Activated CD4-positive, alpha-beta memory T cell treated with anti-CD3 and anti-CD28 coated beads for 36 hours (primary cell): ENCODE measurements at regions of chr12 and their contacts with region 1.

Region 1: DNA sequence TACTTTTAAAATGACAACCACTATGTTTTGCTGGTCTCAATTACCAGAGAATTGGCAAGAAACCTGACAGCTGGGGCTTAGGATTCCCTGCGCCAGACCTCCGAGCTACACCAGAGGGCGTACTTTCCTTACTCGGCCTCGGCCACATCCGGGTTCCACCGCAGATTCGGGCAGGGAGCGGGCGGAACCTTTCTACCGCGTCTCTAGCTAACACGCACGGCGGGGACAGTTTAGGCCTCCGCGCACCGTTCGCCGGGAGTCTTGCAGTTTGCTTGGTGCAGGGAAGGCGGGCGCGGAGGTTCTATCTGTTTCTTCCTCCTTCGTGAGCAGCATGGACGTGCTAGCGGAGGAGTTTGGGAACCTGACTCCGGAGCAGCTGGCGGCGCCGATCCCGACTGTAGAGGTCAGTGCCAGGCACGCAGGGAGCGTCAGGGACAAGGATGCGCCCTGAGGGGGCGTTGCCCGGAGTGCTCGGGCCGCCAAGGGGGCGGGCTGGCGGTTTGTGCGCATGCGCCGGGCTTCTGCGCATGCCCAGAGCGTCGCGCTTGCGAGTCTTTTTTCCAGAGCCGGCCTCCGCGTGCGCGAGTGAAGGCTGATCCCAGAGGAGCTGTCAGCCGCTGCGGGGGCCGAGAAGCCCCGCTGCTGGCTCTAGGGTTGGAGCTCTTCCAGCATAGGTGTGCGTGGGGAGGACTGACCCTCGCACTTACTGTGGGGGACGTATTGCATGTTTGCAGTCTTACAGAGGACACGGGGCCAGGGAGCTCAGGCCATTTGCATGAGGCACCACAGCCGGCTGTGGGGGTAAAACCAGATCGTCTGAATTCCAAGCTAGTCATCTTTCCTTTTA is at the start of gene POLR3B:
- DNase-seq: peak; percentile 97
- H3K4me3 Mint-ChIP-seq: peak within 1 kb of the TSS; percentile 93
- H3K27ac Mint-ChIP-seq: peak within 1 kb of the TSS; percentile 92
- H3K4me1 Mint-ChIP-seq: peaks cover 15% of the 10 kb centered on the region
- H3K27me3 Mint-ChIP-seq: no peaks in the 10 kb centered on the region
- total RNA-seq, gene POLR3B: 6.2 to 7.3 TPM

Region 2: DNA sequence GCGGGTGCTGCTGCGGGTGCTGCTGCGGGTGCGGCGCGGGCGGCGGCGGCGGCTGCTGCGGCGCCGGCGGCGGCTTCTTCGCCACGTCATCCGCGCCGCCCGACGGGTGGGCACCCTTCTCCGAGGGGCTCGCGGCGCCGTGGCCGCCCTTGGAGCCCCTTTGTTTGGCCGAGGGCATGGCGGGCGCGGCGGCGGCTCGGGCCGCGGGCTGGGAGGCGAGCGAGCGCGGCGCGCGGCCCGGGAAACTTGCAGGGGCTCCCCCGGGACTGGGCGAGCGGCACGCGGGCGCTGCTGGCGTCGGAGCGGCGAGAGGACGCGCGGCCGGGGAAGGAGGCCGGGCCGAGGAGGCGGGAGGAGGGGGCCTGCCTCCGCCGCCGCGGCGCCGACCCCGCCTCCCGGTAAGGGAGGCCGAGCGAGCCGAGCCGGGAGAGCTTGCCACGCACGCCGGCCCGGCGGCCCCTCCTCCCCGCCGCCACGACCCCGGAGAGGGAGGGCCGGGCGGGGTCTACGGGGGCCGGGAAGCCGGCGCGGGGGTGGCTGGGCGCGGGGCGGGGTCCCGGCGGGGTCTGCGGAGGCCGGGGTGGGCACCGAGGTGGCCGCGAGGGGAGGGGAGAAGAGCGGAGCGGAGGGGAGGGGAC is 110.0 kb before region 1 on chr12 and contains the start of gene CKAP4:
- CTCF ChIA-PET with region 1: interaction called, 3 read pairs
- POLR2A ChIA-PET with region 1: interaction called, 3 read pairs
- intact Hi-C with region 1: loop called (anchors 2 kb)
- DNase-seq: peak; percentile 61
- H3K4me3 Mint-ChIP-seq: peak within 1 kb of the TSS; percentile 76
- H3K27ac Mint-ChIP-seq: peak within 1 kb of the TSS; percentile 69
- H3K4me1 Mint-ChIP-seq: peaks cover 24% of the 10 kb centered on the region
- H3K27me3 Mint-ChIP-seq: no peaks in the 10 kb centered on the region
- total RNA-seq, gene CKAP4: 18.5 to 19.0 TPM

Region 3: DNA sequence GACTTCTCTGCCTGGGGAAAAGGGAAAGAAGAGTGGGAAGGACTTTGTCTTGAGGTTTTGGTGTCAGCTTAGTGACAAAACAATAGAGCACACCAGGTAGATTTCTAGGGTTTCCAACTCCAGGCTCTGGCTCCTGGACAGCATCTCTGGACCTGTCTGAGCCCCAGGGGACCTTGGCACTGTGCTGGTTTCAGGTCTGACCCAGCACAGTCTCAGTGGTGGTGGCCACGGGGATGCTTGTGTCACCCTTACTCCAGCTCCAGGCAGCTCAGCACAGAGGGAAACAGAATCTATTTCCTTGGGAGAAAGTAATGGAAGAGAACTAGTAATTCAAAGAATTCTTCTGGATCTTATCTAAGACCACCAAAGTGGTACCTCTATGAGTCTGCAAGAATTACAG is 98.8 kb before region 1 on chr12:
- CTCF ChIA-PET with region 1: no interaction called
- POLR2A ChIA-PET with region 1: no interaction called
- intact Hi-C with region 1: no loop called
- DNase-seq: no peak
- H3K4me3 Mint-ChIP-seq: no peak overlapping the region
- H3K27ac Mint-ChIP-seq: no peak overlapping the region
- H3K4me1 Mint-ChIP-seq: no peaks in the 10 kb centered on the region
- H3K27me3 Mint-ChIP-seq: no peaks in the 10 kb centered on the region

Region 4: GRCh38 chr12:106774005-106774807 is 416.4 kb after region 1 on chr12 and contains the start of gene RIC8B:
- CTCF ChIA-PET with region 1: interaction called, 3 read pairs
- POLR2A ChIA-PET with region 1: interaction called, 3 read pairs
- intact Hi-C with region 1: loop called (anchors 1 kb)
- DNase-seq: peak; percentile 91
- H3K4me3 Mint-ChIP-seq: peak within 1 kb of the TSS; percentile 93
- H3K27ac Mint-ChIP-seq: peak within 1 kb of the TSS; percentile 98
- H3K4me1 Mint-ChIP-seq: peaks cover 22% of the 10 kb centered on the region
- H3K27me3 Mint-ChIP-seq: no peaks in the 10 kb centered on the region
- total RNA-seq, gene RIC8B: 9.7 to 9.9 TPM

Region 5: GRCh38 chr12:106919910-106920544 is 562.3 kb after region 1 on chr12:
- CTCF ChIA-PET with region 1: interaction called, 16 read pairs
- POLR2A ChIA-PET with region 1: no interaction called
- intact Hi-C with region 1: loop called (anchors 10 kb)
- DNase-seq: no peak
- H3K4me3 Mint-ChIP-seq: no peak overlapping the region
- H3K27ac Mint-ChIP-seq: no peak overlapping the region
- H3K4me1 Mint-ChIP-seq: peaks cover 9% of the 10 kb centered on the region
- H3K27me3 Mint-ChIP-seq: peaks cover 5% of the 10 kb centered on the region

Region 6: DNA sequence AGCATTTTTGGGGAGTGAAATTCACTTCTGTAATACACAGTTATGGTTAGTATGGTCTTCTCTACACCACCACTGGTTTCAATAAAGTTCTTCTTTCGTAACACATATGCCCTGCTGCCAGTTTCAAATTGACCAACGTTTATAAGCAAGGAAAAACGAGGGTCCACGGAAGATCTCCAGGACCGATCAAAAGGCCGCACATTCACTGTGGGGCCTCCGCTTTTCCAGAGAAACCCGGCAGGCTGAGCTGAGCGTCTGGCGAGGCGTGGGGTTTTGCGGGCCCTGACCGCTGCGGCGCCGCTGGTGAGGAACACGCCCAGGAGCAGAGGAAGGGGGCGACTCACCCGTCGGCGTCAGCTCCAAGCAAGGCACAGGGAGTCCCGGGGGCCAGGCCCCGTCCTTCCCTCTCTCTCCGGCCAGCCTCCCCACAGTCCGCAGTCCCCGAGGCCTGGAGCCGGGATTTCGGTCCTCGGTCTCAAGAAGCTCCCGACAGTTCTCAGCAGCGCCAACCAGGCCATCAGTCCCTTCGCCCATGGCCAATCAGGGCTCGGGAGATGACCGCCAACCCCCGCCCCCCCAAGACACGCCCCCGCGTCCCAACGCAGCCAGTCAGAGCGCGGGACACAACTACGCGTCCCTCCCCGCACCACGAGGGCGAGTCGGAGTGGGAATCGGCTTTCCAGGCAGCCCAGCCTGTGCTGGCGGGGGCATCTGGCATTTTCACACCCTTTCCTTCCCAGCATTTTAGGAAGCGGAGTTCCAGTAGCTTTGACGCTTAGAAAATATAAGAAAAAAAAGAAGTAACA is 629.1 kb after region 1 on chr12 and contains the start of gene MTERF2:
- CTCF ChIA-PET with region 1: no interaction called
- POLR2A ChIA-PET with region 1: no interaction called
- intact Hi-C with region 1: loop called (anchors 5 kb)
- DNase-seq: peak; percentile 90
- H3K4me3 Mint-ChIP-seq: peak within 1 kb of the TSS; percentile 88
- H3K27ac Mint-ChIP-seq: peak within 1 kb of the TSS; percentile 70
- H3K4me1 Mint-ChIP-seq: peaks cover 39% of the 10 kb centered on the region
- H3K27me3 Mint-ChIP-seq: no peaks in the 10 kb centered on the region
- total RNA-seq, gene MTERF2: 5.6 to 5.7 TPM